IMR-90 (cell line): ENCODE measurements at regions of chr10 and their contacts with region 1.

Region 1: GRCh38 chr10:98467506-98468346 is 21.0 kb upstream of the HPS1 start:
- DNase-seq: peak; percentile 83
- ATAC-seq: peak; percentile 99
- H3K4me3 ChIP-seq: peak overlapping the region; percentile 44
- H3K27ac ChIP-seq: no peak overlapping the region
- H3K4me1 ChIP-seq: no peaks in the 10 kb centered on the region
- H3K27me3 ChIP-seq: peaks cover 21% of the 10 kb centered on the region
- CTCF ChIP-seq: peak; percentile 94
- POLR2A ChIP-seq: no peak
- RAD21 ChIP-seq: peak; percentile 95

Region 2: DNA sequence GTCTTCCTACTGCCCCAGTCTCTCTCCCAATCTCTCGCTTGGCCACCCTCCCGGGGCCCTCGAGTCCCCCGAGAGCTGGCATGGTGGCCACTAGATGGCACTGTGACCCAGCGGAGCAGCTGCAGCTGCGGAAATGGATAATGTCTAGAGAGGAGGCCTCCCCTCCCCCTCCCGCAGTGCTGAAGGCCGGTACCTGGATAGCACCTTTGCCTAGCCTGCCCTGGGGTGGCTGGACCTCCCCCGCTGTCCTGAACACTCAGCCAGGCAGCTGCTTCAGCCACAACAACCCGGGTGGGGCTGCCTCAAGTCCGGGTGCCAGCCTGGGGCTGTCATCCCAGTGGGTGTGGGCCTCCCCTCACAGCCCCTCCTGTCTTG is 552.9 kb before region 1 on chr10:
- CTCF ChIA-PET with region 1: no interaction called
- POLR2A ChIA-PET with region 1: no interaction called
- dilution Hi-C with region 1: no loop called
- in situ Hi-C with region 1: no loop called
- intact Hi-C with region 1: loop called (anchors 5 kb)
- DNase-seq: peak; percentile 37
- ATAC-seq: peak; percentile 97
- H3K4me3 ChIP-seq: no peak overlapping the region
- H3K27ac ChIP-seq: no peak overlapping the region
- H3K4me1 ChIP-seq: no peaks in the 10 kb centered on the region
- H3K27me3 ChIP-seq: peaks cover 27% of the 10 kb centered on the region
- CTCF ChIP-seq: peak; percentile 80
- POLR2A ChIP-seq: no peak
- RAD21 ChIP-seq: peak; percentile 86

Region 3: DNA sequence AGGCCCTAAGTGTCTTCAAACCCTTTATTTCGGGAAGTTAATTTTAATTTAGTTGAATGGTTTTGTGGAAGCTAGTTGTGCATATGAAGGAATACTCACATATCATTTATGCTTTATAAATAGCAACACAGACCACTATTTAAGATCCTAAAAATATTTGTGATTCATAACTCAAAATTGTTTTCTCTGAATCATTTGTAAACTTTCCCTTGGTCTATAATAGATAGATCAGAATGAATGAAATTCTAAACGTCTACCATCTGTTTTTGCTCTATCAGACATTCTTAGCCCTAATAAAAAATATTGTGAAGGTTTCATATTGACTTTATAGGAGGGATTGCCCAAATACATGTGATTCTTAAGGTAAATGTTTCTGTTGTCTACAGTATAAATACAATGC is 243.2 kb before region 1 on chr10:
- CTCF ChIA-PET with region 1: no interaction called
- POLR2A ChIA-PET with region 1: no interaction called
- dilution Hi-C with region 1: no loop called
- in situ Hi-C with region 1: no loop called
- intact Hi-C with region 1: no loop called
- DNase-seq: peak; percentile 57
- ATAC-seq: peak; percentile 62
- H3K4me3 ChIP-seq: no peak overlapping the region
- H3K27ac ChIP-seq: no peak overlapping the region
- H3K4me1 ChIP-seq: peaks cover 10% of the 10 kb centered on the region
- H3K27me3 ChIP-seq: no peaks in the 10 kb centered on the region
- CTCF ChIP-seq: no peak
- POLR2A ChIP-seq: no peak
- RAD21 ChIP-seq: no peak

Region 4: DNA sequence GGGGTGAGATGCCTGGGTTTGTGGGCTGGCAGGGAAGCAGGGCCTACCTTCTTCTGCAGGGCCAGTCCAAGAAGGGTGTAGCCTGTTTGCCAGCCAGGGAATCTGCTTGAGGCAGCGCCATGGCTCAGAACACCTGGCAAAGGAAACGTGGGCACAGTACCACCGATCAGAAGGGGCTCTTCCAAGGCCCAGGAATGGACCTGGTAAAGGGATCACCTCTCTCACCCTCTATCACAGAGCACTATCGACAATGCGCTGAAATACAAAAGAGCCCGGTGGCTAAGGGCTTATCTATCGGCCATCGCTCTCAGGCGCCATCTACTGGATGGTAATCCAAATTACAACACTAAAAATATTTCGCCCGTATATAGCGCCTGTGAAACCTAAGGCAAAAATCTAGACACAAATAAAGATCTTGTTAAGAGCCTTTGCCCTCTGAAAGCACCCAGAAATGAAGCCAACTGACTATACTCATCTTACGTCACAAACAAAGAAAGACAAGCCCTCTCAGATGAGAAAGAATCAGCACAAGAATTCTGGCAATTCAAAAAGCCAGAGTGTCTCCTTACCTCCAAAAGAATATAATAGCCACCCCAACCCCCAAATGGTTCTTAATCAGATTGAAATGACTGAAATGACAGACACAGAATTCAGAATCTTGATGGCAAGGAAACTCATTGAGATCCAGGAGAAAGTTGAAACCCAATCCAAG is 196.8 kb after region 1 on chr10:
- CTCF ChIA-PET with region 1: interaction called, 3 read pairs
- POLR2A ChIA-PET with region 1: no interaction called
- dilution Hi-C with region 1: no loop called
- in situ Hi-C with region 1: loop called (anchors 5 kb)
- intact Hi-C with region 1: loop called (anchors 1 kb)
- DNase-seq: peak; percentile 7
- ATAC-seq: peak; percentile 67
- H3K4me3 ChIP-seq: no peak overlapping the region
- H3K27ac ChIP-seq: no peak overlapping the region
- H3K4me1 ChIP-seq: no peaks in the 10 kb centered on the region
- H3K27me3 ChIP-seq: no peaks in the 10 kb centered on the region
- CTCF ChIP-seq: peak; percentile 50
- POLR2A ChIP-seq: no peak
- RAD21 ChIP-seq: peak; percentile 53

Region 5: DNA sequence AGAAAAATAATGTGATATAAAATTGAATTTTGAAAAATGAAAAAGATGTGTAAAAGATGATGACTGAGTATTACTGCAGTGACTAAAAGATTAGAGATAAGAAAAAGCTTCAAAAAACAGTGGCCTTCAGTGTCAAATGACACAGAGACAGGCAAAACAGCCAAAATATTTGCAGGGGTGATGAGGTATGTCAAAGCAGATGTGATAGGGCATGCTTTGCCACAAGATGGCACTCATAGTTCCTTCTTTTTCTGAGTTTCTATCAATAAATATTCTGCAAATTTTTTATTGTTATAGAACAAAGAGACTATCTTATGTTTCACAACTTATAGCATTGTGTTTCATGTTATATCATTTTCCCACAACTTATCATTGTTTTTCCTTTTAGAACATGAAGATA is 323.1 kb after region 1 on chr10:
- CTCF ChIA-PET with region 1: no interaction called
- POLR2A ChIA-PET with region 1: no interaction called
- dilution Hi-C with region 1: no loop called
- in situ Hi-C with region 1: no loop called
- intact Hi-C with region 1: loop called (anchors 5 kb)
- DNase-seq: peak; percentile 12
- ATAC-seq: peak; percentile 53
- H3K4me3 ChIP-seq: no peak overlapping the region
- H3K27ac ChIP-seq: no peak overlapping the region
- H3K4me1 ChIP-seq: no peaks in the 10 kb centered on the region
- H3K27me3 ChIP-seq: no peaks in the 10 kb centered on the region
- CTCF ChIP-seq: peak; percentile 29
- POLR2A ChIP-seq: no peak
- RAD21 ChIP-seq: peak; percentile 29; the same call in 1 of the 2 replicates

Region 6: GRCh38 chr10:98886686-98887085 is 419.0 kb after region 1 on chr10:
- CTCF ChIA-PET with region 1: no interaction called
- POLR2A ChIA-PET with region 1: no interaction called
- dilution Hi-C with region 1: no loop called
- in situ Hi-C with region 1: no loop called
- intact Hi-C with region 1: no loop called
- DNase-seq: peak; percentile 31
- ATAC-seq: no peak
- H3K4me3 ChIP-seq: no peak overlapping the region
- H3K27ac ChIP-seq: no peak overlapping the region
- H3K4me1 ChIP-seq: no peaks in the 10 kb centered on the region
- H3K27me3 ChIP-seq: no peaks in the 10 kb centered on the region
- CTCF ChIP-seq: no peak
- POLR2A ChIP-seq: no peak
- RAD21 ChIP-seq: no peak

Region 7: DNA sequence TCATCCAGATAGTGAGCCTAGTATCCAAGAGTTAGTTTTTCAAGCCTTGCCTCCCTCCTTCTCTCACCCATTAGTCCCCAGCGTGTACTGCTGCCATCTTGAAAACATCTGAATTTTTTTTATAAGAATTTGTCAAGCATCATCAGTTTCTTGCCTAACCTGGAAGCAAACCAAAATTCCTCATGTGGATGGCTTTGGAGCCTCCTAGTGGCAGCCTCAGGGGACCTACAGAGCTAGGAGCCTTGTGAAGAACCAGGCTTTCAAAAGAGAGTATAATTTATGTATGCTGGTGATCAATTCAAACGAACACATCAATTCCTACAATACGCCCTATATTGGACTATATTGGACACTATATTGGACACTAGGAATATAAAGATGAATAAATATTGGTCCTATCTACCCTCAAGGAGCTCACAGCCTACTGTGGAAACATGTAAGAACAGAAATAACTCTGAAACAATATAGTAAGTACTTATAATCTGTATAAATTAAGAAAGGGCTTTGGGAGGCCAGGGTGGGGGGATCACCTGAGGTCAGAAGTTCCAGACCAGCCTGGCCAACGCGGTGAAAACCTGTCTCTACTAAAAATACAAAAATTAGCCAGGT is 704.5 kb after region 1 on chr10:
- CTCF ChIA-PET with region 1: no interaction called
- POLR2A ChIA-PET with region 1: no interaction called
- dilution Hi-C with region 1: no loop called
- in situ Hi-C with region 1: no loop called
- intact Hi-C with region 1: loop called (anchors 1 kb)
- DNase-seq: peak; percentile 51
- ATAC-seq: peak; percentile 65
- H3K4me3 ChIP-seq: no peak overlapping the region
- H3K27ac ChIP-seq: no peak overlapping the region
- H3K4me1 ChIP-seq: no peaks in the 10 kb centered on the region
- H3K27me3 ChIP-seq: no peaks in the 10 kb centered on the region
- CTCF ChIP-seq: peak; percentile 46
- POLR2A ChIP-seq: no peak
- RAD21 ChIP-seq: peak; percentile 43

Region 8: GRCh38 chr10:99395750-99396445 is 928.2 kb after region 1 on chr10:
- CTCF ChIA-PET with region 1: interaction called, 3 read pairs
- POLR2A ChIA-PET with region 1: no interaction called
- dilution Hi-C with region 1: no loop called
- in situ Hi-C with region 1: no loop called
- intact Hi-C with region 1: loop called (anchors 5 kb)
- DNase-seq: peak; percentile 83
- ATAC-seq: peak; percentile 69
- H3K4me3 ChIP-seq: no peak overlapping the region
- H3K27ac ChIP-seq: peak overlapping the region; percentile 7; the same call in 1 of the 2 replicates
- H3K4me1 ChIP-seq: peaks cover 12% of the 10 kb centered on the region
- H3K27me3 ChIP-seq: no peaks in the 10 kb centered on the region; the same call in 1 of the 2 replicates
- CTCF ChIP-seq: no peak
- POLR2A ChIP-seq: no peak
- RAD21 ChIP-seq: no peak